ENCODE measurements at regions of chr7 and their contacts with region 1.

Region 1: DNA sequence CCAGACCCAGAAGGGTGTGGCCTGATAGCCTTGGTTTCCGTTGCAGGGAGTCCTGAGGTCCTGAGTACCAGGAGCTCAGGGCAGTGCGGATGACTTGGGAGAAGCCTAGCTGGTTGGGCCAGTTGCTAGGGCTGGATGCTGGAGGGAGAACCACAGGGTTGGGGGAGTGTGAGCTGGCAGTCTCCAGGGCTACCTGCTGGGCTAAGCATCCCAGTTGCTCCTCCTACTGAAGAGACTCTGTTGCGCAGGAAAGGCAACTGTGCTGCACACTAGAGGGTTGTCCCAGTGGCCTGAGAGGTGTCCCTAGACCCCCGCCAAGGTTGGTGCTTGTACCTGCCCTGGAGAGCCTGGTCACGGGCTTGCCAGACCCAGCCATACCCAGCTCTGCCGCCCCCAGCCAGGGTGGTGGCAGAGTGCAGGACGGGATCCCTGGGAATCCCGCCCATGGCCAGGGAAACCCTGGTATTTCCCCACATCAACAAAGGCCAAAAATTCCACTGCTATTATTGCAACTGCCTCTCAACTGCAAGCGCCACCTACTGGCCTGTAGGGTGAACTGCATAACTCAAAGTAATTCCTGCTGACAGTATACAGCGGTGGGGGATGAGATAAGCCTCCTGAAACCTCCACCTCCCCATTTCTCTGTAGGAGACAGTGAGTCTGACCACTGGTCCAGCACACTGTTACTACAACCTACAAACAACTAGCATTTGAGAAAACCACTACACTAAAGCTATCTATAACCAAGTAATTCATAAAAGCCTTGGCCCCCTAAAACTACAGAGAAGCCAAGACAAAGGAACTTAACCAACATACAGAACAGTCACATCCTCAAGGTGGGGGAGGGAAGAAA is 67.6 kb upstream of the DDC start:
- DNase-seq: peak; percentile 35 to 48
- ATAC-seq: peak; percentile 54 to 92; a peak in 4 of 6 replicates
- H3K4me3 ChIP-seq: no peak overlapping the region
- H3K27ac ChIP-seq: 0 out of 6 replicates have a peak overlapping the region, but pooled peaks of 1 of the 2 experiments have one; percentile 40
- H3K4me1 ChIP-seq: peaks cover under 1% of the 10 kb centered on the region; the same call in 1 of the 3 replicates
- CTCF ChIP-seq: peak; percentile 61
- EP300 ChIP-seq: no peak
- POLR2A ChIP-seq: no peak
- RAD21 ChIP-seq: peak in 1 of 2 experiments; percentile 44; a peak in 2 of 5 replicates

Region 2: DNA sequence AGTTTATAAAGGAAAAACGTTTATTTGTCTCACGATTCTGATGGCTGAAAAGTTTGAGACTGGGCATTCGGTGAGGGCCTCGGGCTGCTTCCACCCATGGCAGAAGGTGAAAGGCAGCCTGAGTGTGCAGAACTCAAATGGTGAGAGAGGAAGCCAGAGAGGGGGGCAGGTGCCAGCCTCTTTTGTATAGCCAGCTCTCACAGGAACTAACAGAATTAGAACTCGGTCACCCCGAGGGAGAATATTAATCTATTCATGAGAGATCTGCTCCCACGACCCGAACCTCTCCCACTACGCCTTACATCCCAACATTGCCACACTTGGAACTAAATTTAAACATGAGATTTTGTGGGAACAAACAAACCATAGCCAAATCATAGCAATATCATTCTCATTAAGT is 652.3 kb before region 1 on chr7:
- CTCF ChIA-PET with region 1: no interaction called
- POLR2A ChIA-PET with region 1: no interaction called
- DNase-seq: no peak
- ATAC-seq: no peak
- H3K4me3 ChIP-seq: no peak overlapping the region
- H3K27ac ChIP-seq: no peak overlapping the region
- H3K4me1 ChIP-seq: no peaks in the 10 kb centered on the region
- CTCF ChIP-seq: no peak
- EP300 ChIP-seq: no peak
- POLR2A ChIP-seq: no peak
- RAD21 ChIP-seq: no peak

Region 3: GRCh38 chr7:50455658-50456057 is 177.1 kb before region 1 on chr7:
- CTCF ChIA-PET with region 1: no interaction called
- POLR2A ChIA-PET with region 1: no interaction called
- DNase-seq: no peak
- ATAC-seq: no peak
- H3K4me3 ChIP-seq: no peak overlapping the region
- H3K27ac ChIP-seq: no peak overlapping the region
- H3K4me1 ChIP-seq: peaks cover 3% of the 10 kb centered on the region; the same call in 1 of the 3 replicates
- CTCF ChIP-seq: no peak
- EP300 ChIP-seq: no peak
- POLR2A ChIP-seq: no peak
- RAD21 ChIP-seq: no peak

Region 4: GRCh38 chr7:50610521-50611277 is 22.1 kb before region 1 on chr7:
- CTCF ChIA-PET with region 1: interaction called, 16 read pairs
- POLR2A ChIA-PET with region 1: no interaction called
- DNase-seq: no peak
- ATAC-seq: no peak
- H3K4me3 ChIP-seq: no peak overlapping the region
- H3K27ac ChIP-seq: no peak overlapping the region
- H3K4me1 ChIP-seq: no peaks in the 10 kb centered on the region
- CTCF ChIP-seq: no peak
- EP300 ChIP-seq: no peak
- POLR2A ChIP-seq: no peak
- RAD21 ChIP-seq: no peak

Region 5: GRCh38 chr7:50621206-50621605 is 11.6 kb before region 1 on chr7:
- CTCF ChIA-PET with region 1: interaction called, 18 read pairs
- POLR2A ChIA-PET with region 1: no interaction called
- DNase-seq: no peak
- ATAC-seq: no peak
- H3K4me3 ChIP-seq: no peak overlapping the region
- H3K27ac ChIP-seq: no peak overlapping the region
- H3K4me1 ChIP-seq: no peaks in the 10 kb centered on the region
- CTCF ChIP-seq: no peak
- EP300 ChIP-seq: no peak
- POLR2A ChIP-seq: no peak
- RAD21 ChIP-seq: no peak

Measured in A549 (cell line).